Lower leg skin (tissue), 4 donors: ENCODE measurements at regions of chr5 and their contacts with region 1.

Region 1: GRCh38 chr5:41094873-41095272 is 23.7 kb upstream of the MROH2B start:
- DNase-seq: no peak
- H3K4me3 ChIP-seq: no peak overlapping the region
- CTCF ChIP-seq: no peak
- POLR2A ChIP-seq: no peak

Region 2: DNA sequence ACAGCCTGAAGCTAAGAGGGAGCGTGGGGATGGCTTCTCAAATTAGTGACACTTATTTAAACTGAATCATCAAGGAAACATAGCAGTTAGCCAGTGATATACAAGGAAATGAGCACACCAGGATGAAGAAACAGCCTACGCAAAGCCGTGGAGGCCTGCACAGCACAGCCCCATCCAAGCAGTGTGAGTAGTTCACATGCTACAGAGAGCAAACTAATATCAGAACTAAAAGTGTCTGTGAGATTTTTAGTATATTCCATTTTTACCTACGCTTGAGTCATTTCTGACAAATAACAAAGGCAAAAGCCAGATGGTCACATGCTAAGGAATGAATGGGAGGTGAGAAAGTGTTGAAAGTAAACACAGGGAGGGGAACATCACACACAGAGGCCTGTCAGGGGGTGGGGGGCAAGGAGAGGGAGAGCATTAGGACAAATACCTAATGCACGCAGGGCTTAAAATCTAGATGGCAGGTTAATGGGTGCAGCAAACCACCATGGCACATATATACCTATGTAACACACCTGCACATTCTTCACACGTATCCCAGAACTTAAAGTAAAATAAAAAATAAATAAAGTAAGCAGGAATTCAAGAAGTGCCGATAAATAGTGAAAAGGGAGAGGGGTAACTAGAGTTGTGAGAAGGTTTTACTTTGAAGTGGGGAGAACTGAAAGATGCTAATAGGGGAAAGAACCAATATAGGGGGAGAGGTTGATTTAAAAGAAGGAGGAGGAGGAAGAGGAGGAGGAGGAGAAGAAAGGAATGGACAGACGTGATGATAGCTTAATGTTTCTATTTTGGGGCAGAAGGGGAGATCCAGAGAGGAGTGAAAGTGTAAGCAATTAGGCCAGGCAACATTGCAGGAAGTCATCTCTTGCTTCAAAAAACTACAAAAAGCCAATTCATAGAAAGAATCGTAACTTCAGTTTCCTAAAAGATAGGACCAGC is 516.1 kb before region 1 on chr5:
- intact Hi-C with region 1: no loop called
- DNase-seq: no peak
- H3K4me3 ChIP-seq: no peak overlapping the region
- CTCF ChIP-seq: no peak
- POLR2A ChIP-seq: no peak

Region 3: GRCh38 chr5:41519801-41520200 is 424.9 kb after region 1 on chr5:
- intact Hi-C with region 1: loop called (anchors 5 kb)
- DNase-seq: no peak
- H3K4me3 ChIP-seq: no peak overlapping the region
- CTCF ChIP-seq: no peak
- POLR2A ChIP-seq: no peak